Heart left ventricle (tissue), 16 donors: ENCODE measurements at regions of chr16 and their contacts with region 1.

Region 1: DNA sequence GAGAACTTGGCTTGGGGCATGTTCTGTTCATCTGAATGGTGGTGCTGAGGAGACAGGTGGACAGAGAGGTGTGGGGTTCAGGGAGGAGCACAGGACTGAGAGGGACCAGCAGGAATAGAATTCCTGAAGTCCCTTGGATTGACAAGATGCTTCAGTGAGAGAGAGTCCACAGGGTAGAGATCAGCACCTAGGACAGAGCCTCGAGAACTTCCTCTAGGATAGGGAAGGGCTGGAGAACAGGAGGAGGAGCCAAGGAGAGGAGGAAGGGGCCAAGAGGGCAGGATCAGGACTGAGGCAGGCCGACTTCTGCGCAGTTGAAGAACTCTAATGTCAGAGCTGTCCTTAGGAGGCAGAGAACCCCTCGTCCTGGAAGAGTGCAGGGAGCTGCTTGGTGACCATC is 138.4 kb downstream of the PRKCB start:
- DNase-seq: no peak
- ATAC-seq: no peak
- H3K4me3 ChIP-seq: no peak overlapping the region
- H3K27ac ChIP-seq: no peak overlapping the region
- H3K4me1 ChIP-seq: no peaks in the 10 kb centered on the region
- H3K27me3 ChIP-seq: peaks cover 0 to 6% (median 0%) of the 10 kb centered on the region in 9 donors
- CTCF ChIP-seq: no peak
- POLR2A ChIP-seq: no peak

Region 2: DNA sequence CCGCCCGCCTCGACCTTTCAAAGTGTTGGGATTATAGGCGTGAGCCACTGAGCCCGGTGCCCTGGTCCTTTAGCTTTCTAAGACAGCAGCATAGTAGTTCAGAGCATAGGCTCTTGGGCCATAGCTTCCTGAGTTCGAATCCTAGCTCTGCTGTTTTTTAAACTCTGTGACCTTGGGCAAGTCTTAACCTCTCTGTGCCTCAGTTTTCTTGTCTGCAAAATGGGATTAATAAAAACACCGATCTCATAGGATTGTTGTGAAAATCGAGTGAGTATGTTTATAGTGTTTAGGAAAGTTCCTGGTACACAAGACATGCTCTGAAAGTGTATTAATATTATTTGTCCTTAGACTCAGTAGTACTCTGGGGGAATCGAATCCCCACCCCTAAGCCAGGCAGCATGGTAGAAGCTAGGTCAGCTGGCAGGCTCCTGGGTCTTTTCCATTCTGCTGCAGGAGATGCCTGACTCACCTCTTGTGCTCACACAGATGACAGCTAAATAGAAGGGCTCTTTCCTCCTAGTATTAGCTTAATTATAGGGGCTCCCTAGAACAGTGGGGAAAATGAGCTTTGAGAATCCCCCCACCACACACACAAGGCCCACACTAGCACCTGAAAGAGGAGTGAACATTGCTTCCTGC is 94.4 kb before region 1 on chr16:
- intact Hi-C with region 1: loop called in 1 of 10 experiments (anchors 10 kb)
- DNase-seq: no peak
- ATAC-seq: no peak
- H3K4me3 ChIP-seq: no peak overlapping the region
- H3K27ac ChIP-seq: peak overlapping the region in 1 of 12 donors; percentile 43
- H3K4me1 ChIP-seq: peaks cover 0 to 60% (median 0%) of the 10 kb centered on the region in 12 donors
- H3K27me3 ChIP-seq: peaks cover 0 to 4% (median 0%) of the 10 kb centered on the region in 9 donors
- CTCF ChIP-seq: no peak
- POLR2A ChIP-seq: no peak

Region 3: GRCh38 chr16:23996258-23996955 is 22.2 kb after region 1 on chr16:
- intact Hi-C with region 1: no loop called
- DNase-seq: no peak
- ATAC-seq: no peak
- H3K4me3 ChIP-seq: no peak overlapping the region
- H3K27ac ChIP-seq: no peak overlapping the region
- H3K4me1 ChIP-seq: no peaks in the 10 kb centered on the region
- H3K27me3 ChIP-seq: peaks cover 0 to 12% (median 0%) of the 10 kb centered on the region in 9 donors
- CTCF ChIP-seq: no peak
- POLR2A ChIP-seq: no peak